ENCODE measurements at regions of chr14 and their contacts with region 1.

Region 1: DNA sequence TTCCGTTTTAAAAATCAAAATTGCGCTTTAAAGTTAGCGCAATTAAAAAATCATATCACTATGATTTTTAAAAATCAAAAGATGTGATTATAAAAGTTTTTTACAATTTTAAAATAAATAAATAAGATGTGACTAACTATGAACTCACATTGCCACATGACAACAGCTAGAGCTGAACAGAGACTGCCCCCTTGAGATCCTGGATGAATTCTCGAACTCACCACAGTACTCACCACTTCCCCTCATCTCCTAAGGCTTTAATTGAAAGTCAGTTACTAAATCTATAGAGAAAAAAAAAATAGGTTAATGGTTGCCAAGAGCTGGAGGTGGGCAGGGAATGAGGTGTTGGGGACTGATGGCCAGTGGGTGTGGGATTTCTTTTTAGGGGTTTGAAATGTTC is 384.2 kb downstream of the ZFP36L1 start:
- DNase-seq: no peak
- CTCF ChIP-seq: no peak

Region 2: GRCh38 chr14:68598621-68599447 is 190.2 kb after region 1 on chr14:
- in situ Hi-C with region 1: no loop called
- DNase-seq: no peak
- CTCF ChIP-seq: no peak

Region 3: GRCh38 chr14:68795597-68796417 is 387.1 kb after region 1 on chr14:
- in situ Hi-C with region 1: loop called (anchors 10 kb)
- DNase-seq: peak; percentile 85
- CTCF ChIP-seq: peak; percentile 62

Measured in GM13976 (cell line).